Ovary (tissue), 10 donors: ENCODE measurements at regions of chr3 and their contacts with region 1.

Region 1: GRCh38 chr3:48119505-48120193 is 68.6 kb downstream of the CDC25A start:
- DNase-seq: peak; percentile 76 to 89 (median 86)
- H3K4me3 ChIP-seq: no peak overlapping the region
- H3K27ac ChIP-seq: peak overlapping the region in 1 of 2 donors; percentile 27
- H3K4me1 ChIP-seq: peaks cover 13% of the 10 kb centered on the region
- H3K27me3 ChIP-seq: no peaks in the 10 kb centered on the region
- CTCF ChIP-seq: no peak
- EP300 ChIP-seq: no peak
- POLR2A ChIP-seq: no peak

Region 2: DNA sequence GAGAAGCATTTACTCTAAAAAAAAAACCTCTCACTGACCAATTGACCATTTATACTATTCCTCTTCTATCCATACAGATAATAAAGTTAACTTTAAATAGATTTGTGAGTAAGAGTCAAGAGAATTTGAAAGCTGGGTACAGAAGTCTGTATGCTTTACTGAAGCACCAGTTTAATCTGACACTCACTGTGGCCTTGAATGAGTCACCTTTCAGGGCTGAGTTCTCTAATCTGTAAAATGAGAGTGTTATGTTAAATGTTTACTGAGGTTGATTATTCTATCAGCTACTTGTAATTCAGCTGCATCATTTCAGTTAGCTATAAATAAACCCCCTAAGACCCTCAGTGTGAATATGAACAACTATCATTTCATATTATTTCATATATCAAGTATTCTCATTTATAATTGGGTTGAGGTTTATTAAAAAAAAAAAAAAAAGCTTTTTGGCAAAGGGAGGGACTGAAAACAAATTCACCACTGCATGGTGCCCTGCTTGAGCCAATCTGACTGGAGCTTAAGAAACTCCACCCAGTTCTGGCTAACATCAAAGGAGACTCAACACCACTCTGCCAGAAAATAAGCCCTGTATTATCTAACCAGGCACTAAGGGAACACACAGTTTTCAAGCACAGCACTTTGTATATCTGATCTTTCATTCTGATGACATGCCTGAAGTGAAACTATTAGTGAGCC is 106.2 kb before region 1 on chr3:
- intact Hi-C with region 1: loop called in 1 of 4 experiments (anchors 10 kb)
- DNase-seq: peak in 2 of 5 donors; percentile 39 to 41
- H3K4me3 ChIP-seq: no peak overlapping the region
- H3K27ac ChIP-seq: peak overlapping the region in 1 of 2 donors; percentile 44
- H3K4me1 ChIP-seq: peaks cover 23% of the 10 kb centered on the region
- H3K27me3 ChIP-seq: no peaks in the 10 kb centered on the region
- CTCF ChIP-seq: no peak
- EP300 ChIP-seq: no peak
- POLR2A ChIP-seq: no peak